Lower leg skin (tissue), 4 donors: ENCODE measurements at regions of chr5 and their contacts with region 1.

Region 1: GRCh38 chr5:145591578-145591977 is 243.6 kb downstream of the PRELID2 start:
- DNase-seq: no peak
- H3K4me3 ChIP-seq: no peak overlapping the region
- CTCF ChIP-seq: no peak
- POLR2A ChIP-seq: no peak

Region 2: DNA sequence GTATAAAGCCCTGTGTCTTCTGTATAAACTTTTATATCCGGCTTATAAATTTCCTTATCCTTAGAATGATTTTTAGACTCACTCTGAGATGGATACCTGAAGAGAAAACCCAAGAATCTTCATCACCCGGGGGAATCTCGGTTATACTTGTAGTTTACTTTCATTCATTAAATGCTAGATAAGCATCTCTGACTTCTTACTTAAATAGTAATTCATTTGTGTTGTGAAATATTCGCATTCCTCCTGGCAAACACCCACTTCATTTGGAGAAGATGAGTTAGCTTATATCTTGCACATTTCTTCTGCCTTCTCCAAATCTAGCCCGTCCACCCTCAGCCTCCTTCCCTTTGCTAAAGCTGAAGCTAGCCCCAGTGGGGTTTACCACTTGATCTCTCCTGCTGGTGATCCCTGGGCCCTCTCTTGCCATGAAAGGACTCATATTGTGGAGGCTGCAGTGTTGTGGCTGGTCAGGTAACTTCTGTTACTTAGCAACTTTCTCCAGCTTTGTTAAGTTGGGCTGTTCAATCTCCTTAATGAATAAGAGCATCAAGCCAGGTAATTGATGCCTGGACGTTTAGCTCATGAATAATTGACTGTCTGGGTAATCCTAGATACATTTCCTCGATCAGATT is 735.8 kb after region 1 on chr5:
- intact Hi-C with region 1: loop called (anchors 5 kb)
- DNase-seq: no peak
- H3K4me3 ChIP-seq: no peak overlapping the region
- CTCF ChIP-seq: no peak
- POLR2A ChIP-seq: no peak